HEK293 (cell line): ENCODE measurements at regions of chr7 and their contacts with region 1.

Region 1: GRCh38 chr7:33986941-33987588 is 81.7 kb downstream of the BMPER start:
- H3K4me3 ChIP-seq: no peak overlapping the region
- H3K27ac ChIP-seq: no peak overlapping the region
- H3K4me1 ChIP-seq: no peaks in the 10 kb centered on the region
- CTCF ChIP-seq: no peak

Region 2: GRCh38 chr7:33350577-33350976 is 636.5 kb before region 1 on chr7:
- CTCF ChIA-PET with region 1: interaction called, 10 read pairs
- POLR2A ChIA-PET with region 1: no interaction called
- H3K4me3 ChIP-seq: no peak overlapping the region
- H3K27ac ChIP-seq: no peak overlapping the region
- H3K4me1 ChIP-seq: no peaks in the 10 kb centered on the region
- CTCF ChIP-seq: no peak

Region 3: DNA sequence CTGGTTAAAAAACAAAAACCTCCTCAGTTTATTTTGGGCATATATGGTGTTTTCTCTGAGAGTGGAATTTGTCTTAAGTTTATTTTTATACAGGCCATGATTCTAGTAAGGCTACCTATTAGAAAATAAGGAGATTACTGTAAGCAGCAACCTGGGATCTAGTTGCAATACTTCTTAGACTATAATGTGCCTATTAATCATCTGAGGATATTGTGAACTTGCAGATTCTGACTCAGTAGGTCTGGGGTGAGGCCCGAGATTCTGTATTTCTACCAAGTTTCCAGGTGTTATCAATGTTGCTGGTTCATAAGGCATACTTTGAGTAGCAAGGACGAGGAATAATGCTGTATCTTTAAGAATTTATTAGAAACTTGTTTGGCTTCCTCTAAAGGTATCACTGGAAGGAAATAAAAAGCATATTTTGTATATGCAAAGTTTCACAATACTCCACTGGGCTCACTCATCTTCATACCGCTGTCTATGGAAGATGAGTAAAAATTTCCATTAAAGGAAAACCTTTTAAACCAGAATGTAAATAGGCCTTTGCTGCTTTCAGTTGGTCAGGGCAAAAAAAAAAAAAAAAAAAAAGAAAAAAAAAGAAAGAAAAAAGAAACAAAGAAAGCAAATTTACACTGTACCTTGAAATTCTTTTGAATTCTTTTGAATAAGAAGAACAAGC is 24.1 kb after region 1 on chr7:
- CTCF ChIA-PET with region 1: interaction called, 10 read pairs
- POLR2A ChIA-PET with region 1: no interaction called
- H3K4me3 ChIP-seq: no peak overlapping the region
- H3K27ac ChIP-seq: no peak overlapping the region
- H3K4me1 ChIP-seq: no peaks in the 10 kb centered on the region
- CTCF ChIP-seq: no peak